ENCODE measurements at regions of chr20 and their contacts with region 1.

Region 1: DNA sequence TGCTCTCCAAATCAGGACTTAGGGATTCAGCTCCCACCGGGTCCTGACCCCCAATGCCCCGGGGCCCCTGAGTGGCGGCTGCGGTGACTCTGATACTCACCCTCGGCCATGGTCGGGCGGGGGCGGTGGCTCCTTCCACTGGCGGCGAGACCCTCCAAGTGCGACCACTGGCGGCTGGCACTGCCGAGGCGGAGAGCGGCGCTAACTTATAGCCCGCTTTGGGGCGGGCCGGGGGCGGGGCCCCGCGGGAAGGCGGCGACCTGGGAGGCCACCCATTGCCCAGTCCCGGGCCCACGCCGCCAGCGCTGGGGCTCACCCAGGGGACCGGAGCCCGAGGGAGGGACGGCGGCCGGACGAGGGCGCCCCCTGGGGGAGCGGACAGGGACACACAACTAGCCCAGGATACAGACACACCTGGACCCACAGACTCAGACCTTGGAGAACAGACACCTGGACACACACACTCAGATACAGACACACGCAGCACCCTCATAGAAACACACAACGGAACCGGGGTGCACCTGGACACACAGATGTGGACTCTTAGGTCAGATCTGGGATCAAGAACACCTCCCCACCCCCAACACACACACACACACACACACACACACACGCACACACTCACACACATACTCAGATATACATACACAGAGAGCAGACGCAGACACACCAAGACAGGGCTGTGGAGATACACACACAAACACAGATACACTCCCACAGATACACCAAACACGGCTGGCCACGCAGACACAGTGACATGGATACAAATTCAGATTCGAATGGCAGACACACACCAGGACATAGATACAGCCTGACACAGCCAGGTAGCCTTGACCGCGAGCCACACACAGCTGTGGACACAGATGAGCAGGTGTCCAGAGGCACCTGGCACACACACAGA is at the start of gene TGM2:
- DNase-seq: peak; percentile 67
- H3K4me3 Mint-ChIP-seq: no peak within 1 kb of the TSS
- H3K27ac Mint-ChIP-seq: no peak within 1 kb of the TSS
- H3K4me1 Mint-ChIP-seq: peaks cover 5% of the 10 kb centered on the region
- H3K27me3 Mint-ChIP-seq: peaks cover 24% of the 10 kb centered on the region
- total RNA-seq, gene TGM2: not detected

Region 2: GRCh38 chr20:37901654-37902503 is 263.5 kb before region 1 on chr20:
- CTCF ChIA-PET with region 1: no interaction called
- POLR2A ChIA-PET with region 1: no interaction called
- intact Hi-C with region 1: loop called (anchors 10 kb)
- DNase-seq: peak; percentile 55
- H3K4me3 Mint-ChIP-seq: peak overlapping the region; percentile 31
- H3K27ac Mint-ChIP-seq: no peak overlapping the region
- H3K4me1 Mint-ChIP-seq: peaks cover 14% of the 10 kb centered on the region
- H3K27me3 Mint-ChIP-seq: peaks cover 59% of the 10 kb centered on the region

Region 3: DNA sequence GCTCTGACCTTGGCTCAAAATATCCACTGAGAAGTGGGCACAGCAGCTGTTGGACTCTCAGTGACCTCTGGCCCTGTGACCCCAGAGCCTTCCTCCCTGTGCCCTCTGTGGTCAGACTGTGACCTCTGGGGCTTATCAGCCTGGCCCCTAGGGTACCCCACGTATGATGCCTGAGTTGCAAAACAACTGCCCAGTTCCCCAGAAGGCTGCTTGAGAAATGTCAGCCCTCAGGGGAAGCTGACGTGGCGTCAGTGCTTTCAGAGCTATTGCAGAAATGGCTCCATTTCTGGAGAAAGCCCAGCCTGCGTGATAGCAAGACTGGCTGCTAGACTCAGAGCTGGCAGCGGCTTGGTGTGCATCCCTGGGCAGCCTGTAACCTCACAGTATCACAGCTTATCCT is 31.3 kb after region 1 on chr20:
- CTCF ChIA-PET with region 1: no interaction called
- POLR2A ChIA-PET with region 1: no interaction called
- intact Hi-C with region 1: no loop called
- DNase-seq: no peak
- H3K4me3 Mint-ChIP-seq: no peak overlapping the region
- H3K27ac Mint-ChIP-seq: no peak overlapping the region
- H3K4me1 Mint-ChIP-seq: no peaks in the 10 kb centered on the region
- H3K27me3 Mint-ChIP-seq: no peaks in the 10 kb centered on the region

Region 4: GRCh38 chr20:38255393-38255792 is 90.1 kb after region 1 on chr20:
- CTCF ChIA-PET with region 1: no interaction called
- POLR2A ChIA-PET with region 1: no interaction called
- intact Hi-C with region 1: no loop called
- DNase-seq: no peak
- H3K4me3 Mint-ChIP-seq: no peak overlapping the region
- H3K27ac Mint-ChIP-seq: no peak overlapping the region
- H3K4me1 Mint-ChIP-seq: no peaks in the 10 kb centered on the region
- H3K27me3 Mint-ChIP-seq: peaks cover 19% of the 10 kb centered on the region

Measured in activated CD4-positive, alpha-beta memory T cell treated with anti-CD3 and anti-CD28 coated beads for 36 hours (primary cell).